Activated T-helper 2 cell treated with anti-CD3 and anti-CD28 coated beads, Interferon-gamma antibody, Interleukin-2, Interleukin-4, amounts not matched to agents 10 μg/mL and 5 μg/mL and 100 μg/mL, durations not matched to agents 14 hours and 24 hours and 36 hours (primary cell): ENCODE measurements at regions of chr2 and their contacts with region 1.

Region 1: GRCh38 chr2:118882709-118883210 is 35.3 kb upstream of the EN1 start:
- DNase-seq: peak; percentile 44
- H3K4me3 Mint-ChIP-seq: peak overlapping the region; percentile 72
- H3K27ac Mint-ChIP-seq: no peak overlapping the region
- H3K4me1 Mint-ChIP-seq: peaks cover 9% of the 10 kb centered on the region
- H3K27me3 Mint-ChIP-seq: no peaks in the 10 kb centered on the region

Region 2: DNA sequence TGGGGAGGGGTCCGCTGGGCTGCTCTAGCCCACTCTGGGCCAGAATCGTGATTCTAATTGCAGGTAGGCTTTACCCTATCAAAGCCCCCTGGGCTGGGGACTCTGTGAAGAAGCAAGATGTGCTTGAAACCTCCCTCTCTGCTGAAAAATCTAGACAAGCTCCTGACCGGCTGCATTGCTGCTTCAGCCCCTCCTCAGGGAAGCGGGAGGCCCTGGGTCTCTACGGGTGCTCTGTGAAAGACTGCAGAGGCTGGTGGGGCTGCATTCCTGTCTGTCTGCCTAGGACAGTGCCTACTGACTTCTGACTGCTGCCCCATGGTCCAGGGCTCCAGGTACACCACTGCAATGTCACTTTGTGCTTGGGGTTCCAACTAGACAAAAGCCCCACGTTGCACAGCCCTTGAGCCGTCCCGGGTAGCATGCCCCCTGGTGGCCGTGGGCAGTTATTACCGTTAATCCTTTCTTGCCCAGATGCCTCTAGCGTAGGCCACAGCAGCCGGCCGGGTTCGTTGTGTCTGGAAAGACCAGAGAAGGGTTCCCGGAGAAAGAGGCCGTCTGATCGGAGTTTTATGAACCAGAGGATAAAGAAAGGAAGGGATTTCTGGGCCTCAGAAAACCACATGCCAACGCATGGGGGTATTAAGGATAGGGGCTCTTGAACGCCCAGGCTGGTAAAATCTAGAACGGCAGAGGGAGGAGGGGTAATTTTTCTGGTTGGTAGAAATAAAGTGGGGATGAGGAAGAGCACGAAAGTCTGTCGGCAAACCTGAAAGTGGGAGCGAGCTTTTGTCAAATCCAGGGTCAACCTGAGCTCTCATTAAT is 291.7 kb after region 1 on chr2:
- intact Hi-C with region 1: loop called (anchors 2 kb)
- DNase-seq: peak; percentile 16
- H3K4me3 Mint-ChIP-seq: no peak overlapping the region
- H3K27ac Mint-ChIP-seq: no peak overlapping the region
- H3K4me1 Mint-ChIP-seq: no peaks in the 10 kb centered on the region
- H3K27me3 Mint-ChIP-seq: no peaks in the 10 kb centered on the region